Heart left ventricle (tissue), 16 donors: ENCODE measurements at regions of chr3 and their contacts with region 1.

Region 1: DNA sequence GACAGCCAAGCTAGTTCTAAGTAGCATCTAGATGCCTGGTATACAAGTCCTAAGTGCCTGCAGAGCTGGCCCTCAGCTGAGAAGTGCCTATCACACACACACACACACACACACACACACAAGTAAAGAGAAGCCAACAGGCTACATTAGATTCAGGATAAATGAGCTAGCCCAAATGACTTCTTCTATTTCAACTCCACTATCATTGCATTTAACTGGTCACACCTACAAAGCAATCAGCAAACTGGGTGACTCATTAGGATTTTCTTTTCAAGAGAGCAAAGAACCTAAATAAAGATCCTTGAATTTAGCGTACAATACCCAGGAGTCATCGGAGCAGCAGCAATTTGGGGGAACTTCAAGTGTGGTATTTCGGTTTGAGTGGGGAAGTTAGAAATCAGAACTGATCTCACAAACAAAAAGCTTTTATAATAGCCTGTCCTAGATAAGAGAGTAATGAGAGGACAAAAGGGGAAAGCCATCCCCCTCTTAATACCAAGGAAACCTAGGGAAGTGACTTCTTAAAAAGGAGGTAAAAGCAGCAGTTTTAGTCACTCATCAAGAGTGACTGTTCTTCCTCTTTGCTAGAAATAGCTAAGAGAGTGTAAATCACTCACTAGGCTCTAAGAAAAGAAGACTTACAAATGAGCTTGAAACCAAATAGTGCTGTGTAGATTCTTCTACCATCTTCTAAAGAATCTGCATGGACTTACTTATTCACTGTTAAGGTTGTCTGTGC is 112.7 kb downstream of the TNIK start:
- DNase-seq: no peak
- ATAC-seq: peak in 2 of 4 donors; percentile 42 to 63
- H3K4me3 ChIP-seq: no peak overlapping the region
- H3K27ac ChIP-seq: peak overlapping the region in 8 of 12 donors; percentile 1 to 63 (median 26)
- H3K4me1 ChIP-seq: peaks cover 0 to 64% (median 26%) of the 10 kb centered on the region in 12 donors
- H3K27me3 ChIP-seq: no peaks in the 10 kb centered on the region
- CTCF ChIP-seq: no peak
- POLR2A ChIP-seq: no peak

Region 2: DNA sequence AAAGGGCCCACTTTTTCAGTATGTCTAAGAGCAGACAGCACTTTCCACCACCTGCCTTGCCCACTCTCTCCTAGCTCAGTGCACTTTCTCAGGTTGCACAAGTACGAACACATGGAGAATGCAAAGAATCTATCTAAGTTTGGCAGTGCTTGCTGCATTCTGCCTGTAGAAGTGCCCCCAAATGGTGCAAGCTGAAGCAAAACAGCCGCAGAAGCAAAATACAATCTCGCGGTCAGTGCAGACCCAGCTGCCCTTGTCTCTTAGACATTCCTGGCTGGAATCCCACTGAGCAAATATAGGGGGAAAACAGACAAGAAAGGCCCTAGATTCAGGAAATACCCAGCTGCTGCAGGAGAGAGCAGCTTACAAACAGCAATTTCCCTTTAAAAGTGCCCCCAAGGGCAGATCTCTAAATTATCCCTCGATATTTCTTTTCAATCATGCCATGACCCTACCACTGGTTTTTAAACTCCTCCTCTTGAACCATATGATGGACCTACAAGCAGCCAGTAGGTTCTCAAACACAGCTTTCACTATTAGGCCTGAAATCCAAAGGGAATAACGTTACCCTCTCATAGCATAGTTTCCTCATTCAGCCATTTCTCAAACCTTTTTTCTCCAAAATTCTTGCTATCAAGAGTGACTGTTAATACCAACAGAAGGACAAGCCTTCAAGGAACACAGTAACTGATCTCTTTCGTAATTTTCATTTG is 45.7 kb after region 1 on chr3:
- intact Hi-C with region 1: loop called in 1 of 10 experiments (anchors 5 kb)
- DNase-seq: no peak
- ATAC-seq: peak in 1 of 4 donors; percentile 37
- H3K4me3 ChIP-seq: peak overlapping the region in 1 of 12 donors; percentile 15
- H3K27ac ChIP-seq: peak overlapping the region in 9 of 12 donors; percentile 11 to 68 (median 32)
- H3K4me1 ChIP-seq: peaks cover 0 to 56% (median 26%) of the 10 kb centered on the region in 12 donors
- H3K27me3 ChIP-seq: no peaks in the 10 kb centered on the region
- CTCF ChIP-seq: no peak
- POLR2A ChIP-seq: no peak

Region 3: DNA sequence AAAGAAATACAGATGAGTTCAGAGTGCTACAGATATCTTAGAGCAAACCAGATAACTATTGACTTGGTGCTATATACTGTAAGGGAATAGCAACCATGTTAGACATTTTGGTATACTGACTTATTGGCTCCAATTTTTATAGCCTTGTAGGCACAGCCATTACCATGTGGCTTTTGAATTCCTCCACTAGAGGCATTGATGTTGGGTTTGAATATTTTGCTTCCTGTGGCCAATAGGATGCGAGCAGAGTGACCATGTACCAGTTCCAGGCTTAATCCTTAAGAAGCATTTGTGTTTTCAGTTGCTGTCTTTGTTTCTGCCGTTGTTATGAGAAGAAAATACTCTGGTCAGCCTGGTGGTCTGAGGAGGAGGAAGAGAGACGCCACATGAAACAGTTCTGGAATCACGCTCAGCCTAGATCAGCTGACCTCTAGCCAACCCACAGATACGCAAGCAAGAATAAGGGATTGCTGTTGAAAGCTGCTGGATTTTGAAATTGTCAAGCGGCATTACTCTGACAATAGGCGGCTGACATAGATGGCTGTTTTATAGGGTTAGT is 222.2 kb after region 1 on chr3:
- intact Hi-C with region 1: no loop called
- DNase-seq: no peak
- ATAC-seq: no peak
- H3K4me3 ChIP-seq: no peak overlapping the region
- H3K27ac ChIP-seq: no peak overlapping the region
- H3K4me1 ChIP-seq: peaks cover 0 to 22% (median 8%) of the 10 kb centered on the region in 12 donors
- H3K27me3 ChIP-seq: no peaks in the 10 kb centered on the region
- CTCF ChIP-seq: no peak
- POLR2A ChIP-seq: no peak